Transverse colon (tissue), 4 donors: ENCODE measurements at regions of chr20 and their contacts with region 1.

Region 1: DNA sequence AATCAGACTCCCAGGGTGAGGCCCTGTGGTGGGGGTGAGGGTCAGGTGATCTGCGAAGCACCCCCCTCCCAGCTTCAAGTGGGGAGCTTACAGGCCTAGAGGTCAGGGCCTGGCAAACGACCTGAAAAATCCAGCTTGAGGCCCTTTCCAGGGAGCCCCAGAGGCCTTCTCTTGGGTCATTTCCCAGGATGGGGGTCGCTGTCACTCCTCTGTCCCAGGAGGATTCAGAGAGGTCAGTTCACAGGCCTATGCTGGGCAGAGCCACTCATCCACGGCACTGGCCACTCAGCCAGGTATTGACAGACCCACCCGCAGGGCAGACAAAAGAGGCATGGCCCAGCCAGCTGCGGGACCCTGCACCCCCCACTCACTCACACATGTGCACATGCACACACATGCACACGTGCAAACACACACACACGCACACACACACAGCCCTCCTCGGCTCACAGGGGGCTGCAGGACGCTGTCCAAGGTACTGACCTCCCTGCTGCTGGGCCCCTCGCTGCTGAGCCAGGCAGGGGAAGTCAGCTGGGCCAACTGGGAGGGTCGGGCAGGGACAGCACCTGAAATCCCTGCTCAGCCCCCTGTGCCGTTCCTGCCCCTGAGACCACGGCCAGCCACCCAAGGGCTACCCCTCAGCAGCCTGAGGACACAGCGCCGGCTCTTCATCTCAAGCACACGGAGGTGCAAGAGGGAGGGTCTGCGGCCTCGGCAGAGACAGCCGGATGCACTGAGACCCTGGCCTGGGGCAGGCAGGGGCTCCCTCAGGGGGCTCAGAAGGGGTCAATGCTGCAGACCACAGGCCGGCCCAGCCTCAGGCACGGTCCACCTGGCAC is 113.8 kb downstream of the TAF4 start:
- DNase-seq: no peak
- H3K4me3 ChIP-seq: no peak overlapping the region
- H3K27ac ChIP-seq: no peak overlapping the region
- H3K4me1 ChIP-seq: peaks cover 0 to 5% (median 0%) of the 10 kb centered on the region in 4 donors
- H3K27me3 ChIP-seq: peaks cover 14% of the 10 kb centered on the region
- CTCF ChIP-seq: no peak
- EP300 ChIP-seq: no peak
- POLR2A ChIP-seq: no peak

Region 2: GRCh38 chr20:60817891-60818290 is 1134.0 kb before region 1 on chr20:
- in situ Hi-C with region 1: no loop called
- intact Hi-C with region 1: loop called (anchors 5 kb)
- DNase-seq: no peak
- H3K4me3 ChIP-seq: no peak overlapping the region
- H3K27ac ChIP-seq: no peak overlapping the region
- H3K4me1 ChIP-seq: no peaks in the 10 kb centered on the region
- H3K27me3 ChIP-seq: no peaks in the 10 kb centered on the region
- CTCF ChIP-seq: no peak
- EP300 ChIP-seq: no peak
- POLR2A ChIP-seq: no peak

Region 3: DNA sequence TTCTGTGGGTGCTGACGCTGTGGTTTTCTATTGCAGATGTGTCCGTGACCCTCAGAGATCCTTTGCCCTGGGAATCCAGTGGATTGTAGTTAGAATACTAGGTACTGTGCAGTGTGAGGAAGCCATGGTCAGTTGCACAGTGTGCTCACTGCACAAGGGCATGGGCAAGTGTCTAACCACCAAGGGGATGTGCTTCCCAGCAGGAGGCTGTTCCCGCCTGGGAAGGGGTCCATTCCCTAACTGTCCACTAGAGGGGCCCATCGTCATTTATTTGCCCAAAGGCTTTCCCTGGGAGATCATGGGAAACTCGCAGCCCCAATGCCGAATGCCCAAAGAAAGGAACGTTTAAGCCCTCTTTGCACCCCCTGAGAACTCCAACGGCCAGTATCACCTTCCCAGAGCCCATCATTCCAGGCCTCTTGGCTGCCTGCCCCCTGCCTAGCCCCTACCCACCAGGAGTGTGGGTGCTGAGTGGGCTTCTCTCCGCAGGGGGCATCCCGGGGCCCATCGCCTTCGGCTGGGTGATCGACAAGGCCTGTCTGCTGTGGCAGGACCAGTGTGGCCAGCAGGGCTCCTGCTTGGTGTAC is 716.6 kb after region 1 on chr20:
- in situ Hi-C with region 1: no loop called
- intact Hi-C with region 1: no loop called
- DNase-seq: peak; percentile 81
- H3K4me3 ChIP-seq: no peak overlapping the region
- H3K27ac ChIP-seq: peak overlapping the region in 1 of 4 donors; percentile 81
- H3K4me1 ChIP-seq: peaks cover 8 to 26% (median 20%) of the 10 kb centered on the region in 4 donors
- H3K27me3 ChIP-seq: no peaks in the 10 kb centered on the region
- CTCF ChIP-seq: peak; percentile 81 to 92 (median 86)
- EP300 ChIP-seq: no peak
- POLR2A ChIP-seq: no peak